ENCODE measurements at regions of chr3 and their contacts with region 1.

Region 1: DNA sequence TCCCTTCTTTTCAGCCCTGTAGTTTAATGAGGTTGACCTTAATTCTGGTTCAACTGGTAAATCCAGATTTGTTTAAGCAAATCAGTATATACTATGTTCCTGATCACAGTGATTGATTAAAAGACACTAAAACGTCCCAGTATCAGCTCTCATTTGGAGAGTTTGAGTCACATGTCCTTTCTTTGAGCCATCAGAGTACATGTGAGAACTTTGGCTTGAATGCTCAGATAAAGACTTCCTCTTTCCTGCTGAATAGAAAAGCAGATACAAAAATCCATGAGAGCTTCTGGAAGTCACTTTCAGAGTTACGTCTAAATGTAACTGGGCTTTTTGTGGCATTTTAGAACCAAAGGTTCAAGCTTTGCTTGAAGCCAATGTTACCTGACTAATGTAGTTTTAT is 341.8 kb upstream of the SATB1 start:
- DNase-seq: peak; percentile 22
- ATAC-seq: no peak
- H3K4me3 ChIP-seq: no peak overlapping the region
- H3K27ac ChIP-seq: peak overlapping the region; percentile 33
- H3K4me1 ChIP-seq: peaks cover 24% of the 10 kb centered on the region
- H3K27me3 ChIP-seq: no peaks in the 10 kb centered on the region
- CTCF ChIP-seq: no peak

Region 2: GRCh38 chr3:18809640-18810305 is 42.8 kb after region 1 on chr3:
- CTCF ChIA-PET with region 1: no interaction called
- POLR2A ChIA-PET with region 1: no interaction called
- intact Hi-C with region 1: loop called (anchors 1 kb)
- DNase-seq: peak; percentile 88
- ATAC-seq: peak; percentile 93
- H3K4me3 ChIP-seq: peak overlapping the region; percentile 30
- H3K27ac ChIP-seq: peak overlapping the region; percentile 29
- H3K4me1 ChIP-seq: peaks cover 44% of the 10 kb centered on the region
- H3K27me3 ChIP-seq: no peaks in the 10 kb centered on the region
- CTCF ChIP-seq: no peak

Region 3: GRCh38 chr3:18841392-18842343 is 74.7 kb after region 1 on chr3:
- CTCF ChIA-PET with region 1: no interaction called
- POLR2A ChIA-PET with region 1: no interaction called
- intact Hi-C with region 1: loop called (anchors 5 kb)
- DNase-seq: no peak
- ATAC-seq: no peak
- H3K4me3 ChIP-seq: no peak overlapping the region
- H3K27ac ChIP-seq: no peak overlapping the region
- H3K4me1 ChIP-seq: peaks cover 12% of the 10 kb centered on the region; the same call in 1 of the 2 replicates
- H3K27me3 ChIP-seq: no peaks in the 10 kb centered on the region
- CTCF ChIP-seq: no peak

Region 4: GRCh38 chr3:19173945-19174344 is 407.0 kb after region 1 on chr3:
- CTCF ChIA-PET with region 1: no interaction called
- POLR2A ChIA-PET with region 1: no interaction called
- intact Hi-C with region 1: no loop called
- DNase-seq: no peak
- ATAC-seq: no peak
- H3K4me3 ChIP-seq: no peak overlapping the region
- H3K27ac ChIP-seq: no peak overlapping the region
- H3K4me1 ChIP-seq: no peaks in the 10 kb centered on the region
- H3K27me3 ChIP-seq: peaks cover 9% of the 10 kb centered on the region; the same call in 1 of the 2 replicates
- CTCF ChIP-seq: no peak